ENCODE measurements at regions of chr18 and their contacts with region 1.

Region 1: GRCh38 chr18:35407871-35408481 is 30.8 kb upstream of the ZNF396 start:
- H3K4me3 Mint-ChIP-seq: no peak overlapping the region
- H3K27ac Mint-ChIP-seq: no peak overlapping the region
- H3K4me1 Mint-ChIP-seq: peaks cover 30% of the 10 kb centered on the region
- H3K27me3 Mint-ChIP-seq: peaks cover 5% of the 10 kb centered on the region

Region 2: DNA sequence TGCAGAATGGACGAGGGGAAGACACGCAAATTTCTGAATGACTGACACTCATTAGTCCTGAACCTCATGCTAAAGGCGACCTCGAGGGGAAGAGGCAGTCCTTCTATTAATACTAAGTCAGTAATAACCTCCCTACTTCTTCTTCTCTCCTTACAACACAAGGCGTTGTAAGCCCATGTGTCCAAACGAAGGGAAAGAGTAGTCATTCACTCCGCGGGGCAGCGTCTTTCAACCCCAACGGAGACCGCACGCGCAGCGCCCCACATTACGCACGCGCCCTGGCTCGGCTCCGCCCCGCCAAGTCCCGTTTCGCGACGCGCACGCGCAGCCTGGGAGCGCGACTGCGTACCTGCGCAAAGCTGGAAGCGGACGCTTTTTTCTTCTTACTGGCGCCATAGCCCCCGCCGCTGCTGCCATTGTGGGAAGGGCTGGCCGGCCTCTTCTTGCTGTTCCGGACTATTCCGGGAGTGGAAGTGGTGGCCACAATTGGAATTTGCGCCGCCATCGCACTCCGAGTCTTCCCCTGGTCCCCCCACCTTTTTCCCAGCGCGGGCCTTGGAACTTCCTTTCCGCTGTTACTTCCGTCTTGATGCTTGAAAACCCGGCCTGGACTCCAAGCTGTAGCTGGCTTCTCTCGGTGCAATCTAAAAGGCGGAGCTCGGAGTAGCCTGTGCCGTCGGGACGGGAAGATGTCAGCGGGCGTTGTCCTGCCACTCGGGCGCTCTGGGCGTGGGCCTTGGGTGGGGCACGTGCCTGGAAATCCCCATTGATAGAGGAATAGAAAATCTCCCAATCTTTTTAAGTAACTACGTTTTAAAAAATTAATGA is 89.6 kb after region 1 on chr18 and contains the start of gene INO80C:
- intact Hi-C with region 1: loop called (anchors 5 kb)
- H3K4me3 Mint-ChIP-seq: peak within 1 kb of the TSS; percentile 99
- H3K27ac Mint-ChIP-seq: peak within 1 kb of the TSS; percentile 99
- H3K4me1 Mint-ChIP-seq: peaks cover 49% of the 10 kb centered on the region
- H3K27me3 Mint-ChIP-seq: no peaks in the 10 kb centered on the region

Region 3: GRCh38 chr18:35573531-35573930 is 165.6 kb after region 1 on chr18:
- intact Hi-C with region 1: loop called (anchors 5 kb)
- H3K4me3 Mint-ChIP-seq: no peak overlapping the region
- H3K27ac Mint-ChIP-seq: no peak overlapping the region
- H3K4me1 Mint-ChIP-seq: no peaks in the 10 kb centered on the region
- H3K27me3 Mint-ChIP-seq: no peaks in the 10 kb centered on the region

Region 4: GRCh38 chr18:35580701-35581539 is 172.9 kb after region 1 on chr18:
- intact Hi-C with region 1: loop called (anchors 5 kb)
- H3K4me3 Mint-ChIP-seq: peak overlapping the region; percentile 76
- H3K27ac Mint-ChIP-seq: peak overlapping the region; percentile 68
- H3K4me1 Mint-ChIP-seq: peaks cover 29% of the 10 kb centered on the region
- H3K27me3 Mint-ChIP-seq: no peaks in the 10 kb centered on the region

Region 5: GRCh38 chr18:35694808-35695207 is 286.8 kb after region 1 on chr18:
- intact Hi-C with region 1: loop called (anchors 5 kb)
- H3K4me3 Mint-ChIP-seq: no peak overlapping the region
- H3K27ac Mint-ChIP-seq: no peak overlapping the region
- H3K4me1 Mint-ChIP-seq: no peaks in the 10 kb centered on the region
- H3K27me3 Mint-ChIP-seq: no peaks in the 10 kb centered on the region

Measured in dendritic cell treated with granulocyte-macrophage colony-stimulating factor and Interleukin-4, amounts not matched to agents 40 ng/mL and 50 ng/mL, for 4 days (primary cell).